ENCODE measurements at regions of chr12 and their contacts with region 1.

Region 1: GRCh38 chr12:50074936-50075807 is 10.0 kb upstream of the SMARCD1 start:
- DNase-seq: no peak
- H3K4me3 ChIP-seq: no peak overlapping the region
- H3K27ac ChIP-seq: no peak overlapping the region
- H3K27me3 ChIP-seq: no peaks in the 10 kb centered on the region
- CTCF ChIP-seq: peak; percentile 91

Region 2: GRCh38 chr12:49945394-49946080 is 129.6 kb before region 1 on chr12:
- CTCF ChIA-PET with region 1: interaction called, 14 read pairs
- POLR2A ChIA-PET with region 1: no interaction called
- DNase-seq: peak; percentile 21
- H3K4me3 ChIP-seq: peak overlapping the region; percentile 44
- H3K27ac ChIP-seq: no peak overlapping the region
- H3K27me3 ChIP-seq: peaks cover 13% of the 10 kb centered on the region
- CTCF ChIP-seq: peak; percentile 95

Region 3: GRCh38 chr12:49974231-49974675 is 100.9 kb before region 1 on chr12:
- CTCF ChIA-PET with region 1: interaction called, 290 read pairs
- POLR2A ChIA-PET with region 1: no interaction called
- DNase-seq: peak; percentile 30
- H3K4me3 ChIP-seq: no peak overlapping the region
- H3K27ac ChIP-seq: no peak overlapping the region
- H3K27me3 ChIP-seq: peaks cover 29% of the 10 kb centered on the region
- CTCF ChIP-seq: peak; percentile 76

Region 4: DNA sequence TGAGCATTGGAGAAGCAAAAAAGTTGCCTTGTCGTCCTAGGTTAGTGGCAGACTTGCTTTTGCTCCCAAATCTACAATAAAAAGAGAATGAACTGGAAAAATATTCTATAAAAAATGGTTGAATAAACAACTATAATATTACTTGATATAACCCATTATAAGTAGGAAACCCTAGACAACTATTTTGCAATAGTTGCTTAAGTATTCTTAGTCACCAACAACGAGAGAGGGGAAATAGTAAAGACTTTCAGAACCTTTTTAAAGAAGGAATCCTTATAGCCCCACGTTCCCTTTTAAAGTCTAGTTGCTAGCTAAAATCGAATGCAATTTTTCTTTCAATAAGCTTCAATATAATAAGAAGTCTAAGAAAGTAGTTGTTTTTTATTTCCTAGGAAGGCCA is 84.9 kb before region 1 on chr12:
- CTCF ChIA-PET with region 1: interaction called, 15 read pairs
- POLR2A ChIA-PET with region 1: no interaction called
- DNase-seq: no peak
- H3K4me3 ChIP-seq: no peak overlapping the region
- H3K27ac ChIP-seq: no peak overlapping the region
- H3K27me3 ChIP-seq: no peaks in the 10 kb centered on the region
- CTCF ChIP-seq: no peak

Region 5: DNA sequence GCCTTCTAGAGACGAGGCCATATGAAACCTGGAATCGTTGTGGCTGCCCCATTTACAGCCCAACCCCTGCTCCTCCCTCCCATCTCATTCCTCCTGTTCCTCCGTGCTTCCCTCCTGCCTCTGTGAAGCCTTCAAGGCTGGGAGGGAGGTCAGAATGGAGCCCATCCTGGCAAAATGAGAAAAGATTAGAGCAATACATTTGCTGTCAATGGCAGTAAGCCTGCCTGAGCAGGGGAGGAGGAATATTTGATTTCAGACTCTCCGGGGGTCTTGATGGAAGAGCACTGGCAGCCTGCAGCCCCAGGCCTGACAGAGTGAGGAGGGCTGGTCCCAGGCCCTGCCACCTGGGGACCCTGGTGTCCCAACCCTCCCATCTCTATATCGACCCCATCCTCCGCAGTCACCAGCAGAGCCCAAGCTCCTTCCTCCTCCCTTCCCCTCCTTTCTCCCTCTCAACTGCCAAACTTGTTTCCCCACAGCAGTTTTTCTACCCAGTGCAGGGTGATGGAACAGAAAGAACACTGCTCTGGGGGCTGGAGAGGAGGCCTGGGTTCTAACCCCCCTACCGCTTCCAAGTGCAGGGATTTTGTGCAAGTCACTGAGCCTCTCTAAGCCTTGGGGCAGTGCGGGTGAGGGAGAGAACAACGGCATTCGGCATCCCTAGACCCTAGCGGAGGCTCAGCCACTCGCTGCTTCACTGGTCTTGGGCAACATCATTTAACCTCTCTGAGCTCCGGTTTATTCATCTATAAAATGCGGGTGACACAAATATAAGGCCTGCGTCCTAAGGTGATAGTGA is 33.9 kb before region 1 on chr12:
- CTCF ChIA-PET with region 1: interaction called, 29 read pairs
- POLR2A ChIA-PET with region 1: no interaction called
- DNase-seq: no peak
- H3K4me3 ChIP-seq: no peak overlapping the region
- H3K27ac ChIP-seq: no peak overlapping the region
- H3K27me3 ChIP-seq: no peaks in the 10 kb centered on the region
- CTCF ChIP-seq: no peak

Region 6: GRCh38 chr12:50111693-50112455 is 36.7 kb after region 1 on chr12 and contains the start of gene COX14:
- CTCF ChIA-PET with region 1: interaction called, 10 read pairs
- POLR2A ChIA-PET with region 1: interaction called, 3 read pairs
- DNase-seq: peak; percentile 99
- H3K4me3 ChIP-seq: peak within 1 kb of the TSS; percentile 99
- H3K27ac ChIP-seq: peak within 1 kb of the TSS; percentile 96
- H3K27me3 ChIP-seq: no peaks in the 10 kb centered on the region
- CTCF ChIP-seq: peak; percentile 92
- polyA plus RNA-seq, gene COX14: 77.0 and 90.6 TPM in 2 replicates

Measured in AG04450 (cell line).